ENCODE measurements at regions of chr10 and their contacts with region 1.

Region 1: DNA sequence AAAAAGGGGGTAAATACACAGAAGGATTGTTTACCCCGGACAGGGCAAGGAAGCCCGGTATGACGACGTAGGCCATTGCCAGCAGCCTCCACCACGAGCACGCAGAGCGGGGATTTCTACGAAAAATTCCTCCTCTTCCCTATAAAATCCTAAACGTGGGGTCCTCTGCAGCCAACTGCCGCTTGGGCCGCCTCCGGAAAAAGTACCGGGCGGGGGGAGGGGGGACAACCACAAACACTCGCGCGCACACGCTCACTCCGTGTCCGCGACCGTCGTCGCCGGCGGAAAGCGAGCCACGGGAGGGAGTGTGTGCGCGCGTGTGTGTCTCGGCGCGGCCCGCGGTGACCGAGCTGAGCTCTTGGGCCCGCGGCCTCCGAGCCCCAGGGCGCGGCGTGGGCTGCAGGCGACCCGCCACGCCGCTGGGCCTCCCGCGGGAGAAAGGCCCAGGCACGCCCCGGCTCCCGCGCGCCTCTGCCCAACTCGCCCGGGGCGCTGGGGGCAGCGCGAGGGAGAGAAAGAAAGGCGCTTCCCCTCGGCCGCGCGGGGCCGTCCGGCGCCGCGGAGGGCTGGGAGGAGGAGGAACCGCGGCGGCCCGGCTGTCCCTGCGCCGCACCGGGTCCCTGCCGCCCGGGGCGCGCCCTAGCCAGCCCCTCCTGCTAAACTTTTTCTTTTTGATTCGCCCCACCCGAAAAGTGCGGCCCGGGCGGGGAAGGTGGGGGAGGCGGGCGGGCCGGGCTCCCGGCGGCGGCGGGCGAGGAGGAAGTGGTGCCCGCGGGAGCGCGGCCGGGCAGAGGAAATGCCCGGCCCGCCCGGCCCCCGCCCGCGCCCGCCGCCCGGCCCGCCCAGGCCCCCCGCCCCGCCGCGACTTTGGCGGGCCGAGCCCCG is 1.5 kb downstream of the CTBP2 start:
- DNase-seq: peak; percentile 40 to 48
- ATAC-seq: peak; percentile 42 to 57 (median 54)
- H3K4me3 ChIP-seq: peak overlapping the region; percentile 50
- H3K4me3 Mint-ChIP-seq: peak overlapping the region; percentile 96
- H3K27ac ChIP-seq: peak overlapping the region; percentile 72
- H3K27ac Mint-ChIP-seq: peak overlapping the region; percentile 95 to 98
- H3K4me1 ChIP-seq: peaks cover 25% of the 10 kb centered on the region
- H3K4me1 Mint-ChIP-seq: peaks cover 48 to 55% of the 10 kb centered on the region in 2 donors
- H3K27me3 ChIP-seq: peaks cover 3% of the 10 kb centered on the region
- H3K27me3 Mint-ChIP-seq: no peaks in the 10 kb centered on the region
- CTCF ChIP-seq: no peak

Region 2: DNA sequence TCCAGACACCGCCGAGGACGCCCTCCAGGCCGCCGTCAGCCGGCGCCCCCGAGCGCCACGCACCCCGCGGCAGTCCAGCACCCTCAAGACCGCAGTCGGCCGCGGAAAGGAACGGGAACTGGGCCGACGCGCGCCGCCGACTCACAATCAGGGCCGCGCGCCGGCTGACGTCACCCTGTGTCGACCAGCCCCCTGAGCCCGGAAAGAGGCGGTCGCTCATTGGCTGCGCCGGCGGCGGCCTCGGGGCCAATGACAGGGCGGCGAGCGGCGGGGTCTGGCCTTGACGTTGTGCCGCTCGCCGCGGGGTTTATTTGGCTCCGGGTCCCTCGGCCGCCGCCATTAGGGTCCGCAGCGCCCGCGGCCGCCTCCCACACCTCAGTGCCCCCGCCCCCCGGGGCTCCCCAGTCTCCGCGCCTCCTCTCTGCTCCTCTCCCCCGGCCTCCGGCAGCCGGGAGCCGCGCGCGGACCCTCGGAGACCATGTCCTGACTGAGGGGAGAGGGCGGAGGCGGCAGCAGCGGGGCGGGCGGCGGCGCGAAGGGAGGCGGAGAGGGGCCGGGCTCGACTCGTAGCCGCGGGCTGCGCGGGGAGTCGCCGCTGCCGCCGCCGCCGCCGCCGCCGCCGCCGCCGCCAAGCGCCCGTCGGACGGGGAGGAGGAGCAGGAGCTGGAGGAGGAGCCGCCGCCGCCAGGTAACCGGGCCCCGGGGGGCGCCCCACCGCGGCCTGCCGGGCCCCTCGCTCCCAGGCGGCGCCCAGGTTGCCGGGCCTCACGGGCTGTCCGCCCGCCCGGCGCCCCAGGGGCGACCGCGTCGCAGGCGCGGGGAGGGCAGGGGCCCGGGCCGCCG is 242.0 kb before region 1 on chr10:
- intact Hi-C with region 1: loop called (anchors 10 kb)
- DNase-seq: peak; percentile 98
- ATAC-seq: peak; percentile 89 to 95 (median 92)
- H3K4me3 ChIP-seq: peak overlapping the region; percentile 68
- H3K4me3 Mint-ChIP-seq: peak overlapping the region; percentile 96
- H3K27ac ChIP-seq: peak overlapping the region; percentile 93
- H3K27ac Mint-ChIP-seq: peak overlapping the region; percentile 95
- H3K4me1 ChIP-seq: peaks cover 16% of the 10 kb centered on the region
- H3K4me1 Mint-ChIP-seq: peaks cover 36 to 40% of the 10 kb centered on the region in 2 donors
- H3K27me3 ChIP-seq: no peaks in the 10 kb centered on the region
- H3K27me3 Mint-ChIP-seq: peaks cover 8 to 12% of the 10 kb centered on the region in 2 donors
- CTCF ChIP-seq: no peak

Region 3: DNA sequence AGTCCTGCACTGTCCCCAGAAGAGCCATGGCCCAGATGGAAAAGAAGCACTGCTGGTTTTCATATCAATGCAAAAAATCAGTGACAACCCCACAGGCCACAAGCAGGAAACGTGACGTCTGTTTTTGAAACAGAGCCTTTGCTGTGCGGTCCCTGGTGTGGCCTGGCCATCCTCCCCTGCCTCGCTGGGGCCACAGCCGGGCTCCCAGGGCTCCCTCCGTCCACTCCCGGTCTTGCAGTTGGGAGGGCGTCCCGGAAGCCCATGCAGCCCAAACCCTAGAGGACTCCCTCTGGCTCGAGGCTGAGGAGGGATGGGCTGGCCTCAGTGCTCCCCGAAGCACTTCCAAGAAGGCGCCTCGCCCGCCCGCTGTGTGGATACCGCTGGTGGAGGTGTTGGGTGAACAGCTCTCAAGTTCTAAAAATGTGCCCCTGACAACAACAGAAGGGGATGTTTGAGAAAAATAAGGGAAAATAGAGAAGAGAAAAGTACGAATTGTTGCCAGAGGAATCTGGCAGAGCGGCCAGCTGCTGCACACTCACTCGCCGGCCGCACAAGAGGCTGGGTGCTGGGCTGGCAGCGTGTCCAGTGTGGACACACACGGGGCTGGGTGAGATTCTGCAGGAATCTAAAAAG is 143.4 kb before region 1 on chr10:
- intact Hi-C with region 1: loop called (anchors 5 kb)
- DNase-seq: peak; percentile 49 to 70
- ATAC-seq: peak; percentile 83 to 92 (median 87)
- H3K4me3 ChIP-seq: no peak overlapping the region
- H3K4me3 Mint-ChIP-seq: peak overlapping the region; percentile 90
- H3K27ac ChIP-seq: peak overlapping the region; percentile 8
- H3K27ac Mint-ChIP-seq: peak overlapping the region; percentile 84 to 87
- H3K4me1 ChIP-seq: peaks cover 53% of the 10 kb centered on the region
- H3K4me1 Mint-ChIP-seq: peaks cover 73 to 80% of the 10 kb centered on the region in 2 donors
- H3K27me3 ChIP-seq: no peaks in the 10 kb centered on the region
- H3K27me3 Mint-ChIP-seq: no peaks in the 10 kb centered on the region
- CTCF ChIP-seq: no peak

Region 4: DNA sequence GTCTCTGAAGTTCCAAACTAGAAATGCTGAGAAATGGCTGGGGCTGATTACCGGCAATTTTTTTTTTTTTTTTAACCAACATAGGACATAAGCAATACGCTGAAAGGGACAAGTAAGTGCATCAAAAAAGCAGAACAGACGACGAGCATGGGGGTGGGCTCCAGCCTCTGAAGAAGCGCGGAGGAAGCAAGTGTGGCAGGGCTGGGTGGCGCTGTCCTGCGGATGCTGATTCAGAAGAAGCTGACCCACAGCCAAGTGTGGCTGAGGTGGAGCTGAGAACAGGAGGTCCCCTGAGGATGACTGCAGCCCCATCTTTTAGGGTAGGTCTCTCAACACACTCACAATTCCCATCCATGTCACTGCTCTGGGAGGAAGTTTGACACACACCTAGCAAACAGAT is 64.0 kb before region 1 on chr10:
- intact Hi-C with region 1: loop called (anchors 5 kb)
- DNase-seq: peak in 1 of 2 donors; percentile 28
- ATAC-seq: peak; percentile 46 to 74 (median 74)
- H3K4me3 ChIP-seq: no peak overlapping the region
- H3K4me3 Mint-ChIP-seq: peak overlapping the region; percentile 78
- H3K27ac ChIP-seq: no peak overlapping the region
- H3K27ac Mint-ChIP-seq: peak overlapping the region; percentile 85 to 91
- H3K4me1 ChIP-seq: peaks cover 62% of the 10 kb centered on the region
- H3K4me1 Mint-ChIP-seq: peaks cover 94 to 95% of the 10 kb centered on the region in 2 donors
- H3K27me3 ChIP-seq: no peaks in the 10 kb centered on the region
- H3K27me3 Mint-ChIP-seq: no peaks in the 10 kb centered on the region
- CTCF ChIP-seq: no peak